Right ventricle myocardium superior (tissue), 1 donor: ENCODE measurements at regions of chr14 and their contacts with region 1.

Region 1: GRCh38 chr14:38721822-38722431 is 381.1 kb downstream of the SEC23A start:
- DNase-seq: peak; percentile 48
- ATAC-seq: peak; percentile 67

Region 2: GRCh38 chr14:38762426-38762825 is 40.5 kb after region 1 on chr14:
- intact Hi-C with region 1: no loop called
- DNase-seq: no peak
- ATAC-seq: no peak

Region 3: GRCh38 chr14:39015360-39015961 is 293.5 kb after region 1 on chr14:
- intact Hi-C with region 1: loop called (anchors 10 kb)
- DNase-seq: no peak
- ATAC-seq: peak; percentile 53